AG04449 (cell line): ENCODE measurements at regions of chr9 and their contacts with region 1.

Region 1: GRCh38 chr9:129737479-129738274 is 15.2 kb downstream of the PTGES start:
- DNase-seq: no peak
- H3K4me3 ChIP-seq: peak overlapping the region; percentile 51
- CTCF ChIP-seq: peak; percentile 95

Region 2: GRCh38 chr9:129641746-129642513 is 95.7 kb before region 1 on chr9 and contains the start of gene ASB6:
- CTCF ChIA-PET with region 1: interaction called, 30 read pairs
- POLR2A ChIA-PET with region 1: no interaction called
- DNase-seq: peak; percentile 69
- H3K4me3 ChIP-seq: peak within 1 kb of the TSS; percentile 87
- CTCF ChIP-seq: peak; percentile 89

Region 3: DNA sequence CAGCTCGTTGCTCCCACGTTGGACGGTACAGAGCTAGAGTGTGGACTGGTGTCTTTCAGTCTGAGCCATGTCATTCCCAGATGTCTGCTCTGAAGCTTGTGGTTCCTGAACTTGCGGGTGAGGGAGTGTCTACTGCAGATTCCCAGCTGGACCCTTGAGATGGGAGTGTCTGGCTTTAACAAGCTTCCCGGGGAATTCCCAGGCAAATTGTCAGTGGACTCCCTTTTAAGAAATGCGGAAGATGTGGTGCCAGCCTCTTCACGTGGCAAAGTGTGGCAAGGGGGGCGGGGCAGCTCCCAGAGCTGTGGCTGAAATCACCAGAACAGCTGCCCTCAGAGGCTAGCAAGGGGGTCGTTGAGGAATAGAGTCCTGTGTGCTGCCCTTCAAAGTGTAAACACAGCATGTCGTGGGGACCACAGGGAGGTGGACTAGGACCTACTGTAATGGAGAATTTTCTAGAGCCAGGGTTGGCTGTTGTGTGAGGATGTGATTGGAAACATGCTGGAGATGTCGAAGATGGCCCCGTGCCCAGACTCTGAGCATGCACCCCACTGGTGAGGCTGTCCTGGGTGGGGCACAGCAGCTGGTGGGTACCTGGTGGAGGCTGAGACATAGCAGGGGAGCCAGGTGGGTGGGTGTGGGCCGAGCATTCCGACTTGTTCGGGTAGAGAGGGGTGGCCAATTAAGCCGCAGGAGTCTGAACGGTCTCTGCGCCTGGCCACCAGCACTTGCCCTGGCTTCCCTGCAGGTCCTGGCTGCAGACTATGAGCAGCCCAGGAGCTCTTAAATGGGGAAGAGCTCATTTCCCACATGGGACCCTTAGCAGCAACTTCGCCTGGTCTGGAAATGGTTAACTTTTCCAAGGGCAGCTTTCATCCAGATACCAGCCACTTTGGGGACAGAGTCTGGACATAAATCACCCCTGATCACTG is 34.8 kb before region 1 on chr9:
- CTCF ChIA-PET with region 1: interaction called, 19 read pairs
- POLR2A ChIA-PET with region 1: no interaction called
- DNase-seq: peak; percentile 91
- H3K4me3 ChIP-seq: no peak overlapping the region
- CTCF ChIP-seq: no peak

Region 4: GRCh38 chr9:129720181-129720864 is 17.4 kb before region 1 on chr9:
- CTCF ChIA-PET with region 1: interaction called, 169 read pairs
- POLR2A ChIA-PET with region 1: no interaction called
- DNase-seq: no peak
- H3K4me3 ChIP-seq: no peak overlapping the region
- CTCF ChIP-seq: peak; percentile 35

Region 5: DNA sequence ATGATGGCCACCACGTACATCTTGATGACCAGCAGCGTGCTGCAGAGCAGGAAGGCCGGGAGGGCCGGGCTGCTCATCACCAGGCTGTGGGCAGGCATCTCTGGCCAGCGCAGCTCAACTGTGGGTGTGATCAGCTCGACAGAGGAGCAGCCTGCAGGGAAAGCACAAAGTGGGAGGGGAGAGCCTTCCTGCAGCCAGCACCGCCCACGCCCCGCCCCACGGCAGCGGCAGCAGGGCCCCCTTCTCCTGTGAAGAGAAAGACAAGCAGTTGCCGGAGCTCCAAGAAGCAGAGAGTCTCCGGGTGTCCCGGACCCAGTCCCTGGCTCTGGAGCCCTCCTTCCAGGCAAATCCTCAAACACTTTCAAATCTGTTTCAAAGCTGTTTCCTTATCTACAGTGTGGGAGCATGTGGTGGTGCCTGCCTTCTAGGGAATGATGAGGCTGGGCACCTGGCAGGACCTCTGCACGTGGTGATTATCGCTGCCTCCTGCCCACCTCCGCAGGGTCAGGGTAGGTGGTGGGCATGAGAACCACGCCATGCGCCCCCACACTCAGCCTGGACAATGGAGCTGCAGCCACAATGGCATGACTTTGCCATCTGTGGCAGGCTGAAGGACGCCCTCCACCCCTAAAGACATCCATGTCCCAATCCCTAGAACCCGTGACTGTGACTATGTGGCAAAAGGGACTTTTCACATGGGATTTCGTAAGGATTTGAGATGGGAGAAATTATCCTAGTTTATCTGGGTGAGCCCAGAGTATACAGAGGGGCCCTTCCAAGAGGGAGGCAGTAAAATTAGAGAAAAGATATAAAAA is 15.4 kb after region 1 on chr9 and contains the start of gene PTGES:
- CTCF ChIA-PET with region 1: interaction called, 93 read pairs
- POLR2A ChIA-PET with region 1: interaction called, 3 read pairs
- DNase-seq: no peak
- H3K4me3 ChIP-seq: peak within 1 kb of the TSS; percentile 63
- CTCF ChIP-seq: no peak

Region 6: DNA sequence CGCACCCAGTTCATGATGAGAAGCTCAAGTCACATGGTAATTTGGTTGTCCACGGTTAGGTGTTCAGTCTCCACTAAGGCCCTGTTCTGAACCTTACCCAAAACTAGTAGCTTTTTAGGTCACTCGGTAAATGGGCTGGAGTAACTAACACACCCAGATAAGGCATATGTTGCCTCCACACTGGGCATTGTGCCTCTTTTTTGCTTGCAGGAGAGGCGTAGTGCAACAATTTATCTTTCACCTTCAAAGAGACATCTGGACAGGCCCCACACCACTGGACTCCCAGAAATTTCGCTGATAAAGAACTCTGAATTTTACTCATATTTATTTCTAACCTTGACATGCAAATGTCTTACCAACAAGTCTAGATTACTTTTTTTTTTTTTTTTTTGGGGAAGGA is 32.0 kb after region 1 on chr9:
- CTCF ChIA-PET with region 1: interaction called, 14 read pairs
- POLR2A ChIA-PET with region 1: no interaction called
- DNase-seq: no peak
- H3K4me3 ChIP-seq: no peak overlapping the region
- CTCF ChIP-seq: no peak

Region 7: GRCh38 chr9:129783516-129784361 is 46.1 kb after region 1 on chr9:
- CTCF ChIA-PET with region 1: interaction called, 429 read pairs
- POLR2A ChIA-PET with region 1: interaction called, 3 read pairs
- DNase-seq: no peak
- H3K4me3 ChIP-seq: no peak overlapping the region
- CTCF ChIP-seq: peak; percentile 84

Region 8: GRCh38 chr9:130352081-130352480 is 614.4 kb after region 1 on chr9:
- CTCF ChIA-PET with region 1: no interaction called
- POLR2A ChIA-PET with region 1: no interaction called
- DNase-seq: no peak
- H3K4me3 ChIP-seq: no peak overlapping the region
- CTCF ChIP-seq: no peak